ENCODE measurements at regions of chr12 and their contacts with region 1.

Region 1: DNA sequence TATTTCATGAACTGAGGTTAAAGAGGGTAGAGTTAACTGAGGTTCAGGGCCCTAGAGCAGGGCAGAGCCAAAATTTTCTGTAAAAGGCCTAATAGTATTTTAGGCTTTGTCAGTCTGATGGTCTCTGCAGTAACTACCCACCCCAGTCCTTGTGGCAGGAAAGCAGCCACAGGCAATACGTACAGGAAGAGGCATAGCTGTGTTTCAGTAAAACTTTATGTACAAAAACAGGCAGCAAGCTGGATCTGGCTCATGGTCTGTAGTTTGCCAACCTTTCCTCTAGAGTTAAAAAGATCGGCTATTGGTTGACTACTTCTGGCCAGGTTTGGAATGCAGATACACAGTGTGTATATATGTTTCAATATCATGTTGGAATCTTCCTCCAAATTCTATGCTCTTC is 17.2 kb downstream of the TM7SF3 start:
- DNase-seq: peak; percentile 51 to 86 (median 78)
- H3K4me3 ChIP-seq: peak overlapping the region in 2 of 7 experiments; percentile 16 to 40
- H3K27ac ChIP-seq: peak overlapping the region; percentile 25 to 70
- H3K4me1 ChIP-seq: peaks cover 20 to 56% (median 36%) of the 10 kb centered on the region in 4 experiments
- H3K27me3 ChIP-seq: no peaks in the 10 kb centered on the region

Region 2: GRCh38 chr12:26979733-26980132 is 17.3 kb before region 1 on chr12:
- CTCF ChIA-PET with region 1: interaction called, 17 read pairs
- POLR2A ChIA-PET with region 1: no interaction called
- DNase-seq: no peak
- H3K4me3 ChIP-seq: no peak overlapping the region
- H3K27ac ChIP-seq: no peak overlapping the region
- H3K4me1 ChIP-seq: peaks cover 0 to 7% (median 2%) of the 10 kb centered on the region in 4 experiments
- H3K27me3 ChIP-seq: no peaks in the 10 kb centered on the region

Region 3: DNA sequence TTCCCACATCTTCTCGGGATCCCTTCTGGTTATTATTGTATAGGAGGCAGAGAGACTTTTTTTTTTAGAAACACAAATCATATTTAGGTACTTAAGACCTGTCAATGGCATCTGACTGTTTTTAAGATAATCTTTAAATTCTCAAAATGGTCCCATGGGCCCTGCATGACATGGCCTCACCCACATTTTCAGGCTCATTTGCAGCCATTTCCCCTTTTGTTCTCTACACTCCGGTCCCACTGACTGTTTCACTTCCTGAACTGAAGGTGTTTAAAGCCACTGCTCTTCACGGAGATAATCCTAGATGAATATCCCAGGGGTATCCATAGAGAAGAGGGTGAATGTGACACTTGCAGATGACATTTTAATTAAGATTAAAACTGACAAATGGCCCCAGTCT is 97.7 kb after region 1 on chr12:
- CTCF ChIA-PET with region 1: no interaction called
- POLR2A ChIA-PET with region 1: no interaction called
- DNase-seq: no peak
- H3K4me3 ChIP-seq: no peak overlapping the region
- H3K27ac ChIP-seq: no peak overlapping the region
- H3K4me1 ChIP-seq: peaks cover 0 to 6% (median 0%) of the 10 kb centered on the region in 4 experiments
- H3K27me3 ChIP-seq: no peaks in the 10 kb centered on the region

Region 4: DNA sequence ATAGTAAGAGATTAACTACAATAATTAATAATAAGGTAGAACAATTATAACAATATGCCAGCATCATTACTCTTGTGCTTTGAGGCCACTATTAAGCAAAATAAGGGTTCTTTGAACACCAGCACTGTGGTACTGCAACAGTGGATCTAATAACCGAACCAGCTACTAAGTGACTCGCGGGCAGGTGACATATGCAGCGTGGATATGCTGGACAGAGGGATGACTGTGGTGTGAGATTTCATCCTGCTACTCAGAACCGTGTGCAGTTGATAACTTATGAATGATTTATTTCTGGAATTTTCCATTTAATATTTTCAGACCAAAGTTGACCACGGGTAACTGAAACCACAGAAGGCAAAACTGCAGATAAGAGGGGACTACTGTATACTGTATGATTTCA is 370.1 kb after region 1 on chr12:
- CTCF ChIA-PET with region 1: no interaction called
- POLR2A ChIA-PET with region 1: no interaction called
- DNase-seq: peak in 1 of 3 donors; percentile 24
- H3K4me3 ChIP-seq: no peak overlapping the region
- H3K27ac ChIP-seq: no peak overlapping the region
- H3K4me1 ChIP-seq: peaks cover 0 to 2% (median 0%) of the 10 kb centered on the region in 4 experiments
- H3K27me3 ChIP-seq: no peaks in the 10 kb centered on the region